ENCODE measurements at regions of chr13 and their contacts with region 1.

Region 1: DNA sequence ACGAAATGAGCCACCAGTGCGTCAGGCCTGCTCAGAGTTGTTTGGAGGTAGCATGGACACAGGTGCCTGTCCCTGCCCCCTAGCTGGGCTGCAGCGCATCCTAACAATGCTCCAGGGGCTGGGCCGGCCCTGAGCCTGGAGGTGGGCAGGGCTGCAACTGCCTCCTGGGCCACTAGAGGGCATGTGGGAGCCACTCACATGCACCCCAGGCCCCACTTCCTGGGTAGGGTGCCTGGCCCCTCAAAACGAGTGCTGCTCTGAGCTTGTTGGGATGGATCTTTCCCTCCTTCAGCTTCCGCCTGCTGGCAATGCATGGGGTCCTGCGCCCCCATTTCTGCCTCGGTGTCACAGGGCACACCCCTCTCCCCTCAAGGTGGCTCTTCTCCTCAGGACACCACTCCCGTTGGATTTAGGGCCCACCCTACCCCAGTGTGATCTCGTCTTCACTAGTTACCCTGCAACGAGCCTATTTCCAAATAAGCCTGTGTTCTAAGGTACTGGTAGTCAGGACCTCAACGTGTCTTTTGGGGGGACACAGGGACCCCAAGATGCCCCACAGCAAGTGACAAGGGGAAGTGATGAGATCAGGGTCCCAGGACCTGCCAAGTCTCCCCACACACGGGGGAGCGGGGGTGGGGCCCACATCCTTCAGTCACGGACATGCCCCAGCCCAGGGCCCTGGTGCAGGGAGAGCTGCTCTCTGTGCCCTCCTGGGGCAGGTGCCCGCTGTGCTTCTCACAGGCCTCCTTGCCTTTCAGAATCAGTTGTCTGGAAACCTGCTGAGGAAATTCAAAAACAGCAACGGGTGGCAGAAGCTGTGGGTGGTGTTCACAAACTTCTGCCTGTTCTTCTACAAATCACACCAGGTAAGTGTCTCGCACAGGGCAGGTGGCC is 131.3 kb downstream of the STK24 start:
- DNase-seq: peak; percentile 64 to 90 (median 87)
- ATAC-seq: peak; percentile 81 to 85
- H3K4me3 ChIP-seq: no peak overlapping the region
- H3K27ac ChIP-seq: no peak overlapping the region
- H3K4me1 ChIP-seq: peaks cover 3% of the 10 kb centered on the region
- H3K27me3 ChIP-seq: no peaks in the 10 kb centered on the region

Region 2: DNA sequence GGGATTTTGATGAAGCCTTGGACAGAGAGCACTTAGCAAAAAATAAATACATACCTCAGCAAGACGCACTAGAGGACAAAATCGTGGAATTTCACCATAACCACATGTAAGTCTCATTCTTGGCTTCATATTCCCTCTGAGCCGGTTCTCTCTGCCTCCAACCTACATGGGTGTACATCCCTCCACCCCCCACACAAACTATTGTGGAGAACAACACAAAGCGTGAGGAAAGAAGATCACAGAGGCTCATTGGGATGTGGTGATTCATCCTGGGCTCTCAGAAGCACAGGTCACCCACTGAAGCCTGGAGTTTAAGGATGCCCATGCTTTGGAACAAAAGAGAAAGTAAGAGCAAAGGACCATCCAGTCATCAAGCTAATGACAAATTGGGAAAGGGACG is 60.8 kb before region 1 on chr13:
- intact Hi-C with region 1: loop called in 1 of 4 experiments (anchors 10 kb)
- DNase-seq: no peak
- ATAC-seq: no peak
- H3K4me3 ChIP-seq: no peak overlapping the region
- H3K27ac ChIP-seq: no peak overlapping the region
- H3K4me1 ChIP-seq: peaks cover 4% of the 10 kb centered on the region
- H3K27me3 ChIP-seq: no peaks in the 10 kb centered on the region

Region 3: DNA sequence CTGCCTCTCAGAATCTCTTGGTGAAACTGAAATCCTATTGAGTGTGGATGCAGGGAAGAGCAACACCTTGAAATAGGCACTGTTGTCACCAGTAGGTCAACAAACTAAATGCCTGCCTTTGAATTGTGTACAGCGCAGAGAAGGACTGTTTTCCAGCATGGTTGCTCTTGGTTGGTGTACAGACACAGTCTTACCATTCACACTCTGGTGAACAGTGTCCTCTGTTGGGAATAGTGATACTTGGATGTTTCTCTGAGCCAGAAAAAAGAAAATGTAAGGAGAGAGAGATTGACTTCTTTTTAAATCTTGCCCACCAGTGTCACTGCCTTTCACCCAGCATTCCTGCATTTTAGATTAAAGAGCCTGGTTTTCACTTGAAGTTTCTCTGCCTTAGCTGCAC is 48.4 kb before region 1 on chr13:
- intact Hi-C with region 1: no loop called
- DNase-seq: no peak
- ATAC-seq: peak in 1 of 2 donors; percentile 60
- H3K4me3 ChIP-seq: no peak overlapping the region
- H3K27ac ChIP-seq: no peak overlapping the region
- H3K4me1 ChIP-seq: no peaks in the 10 kb centered on the region
- H3K27me3 ChIP-seq: no peaks in the 10 kb centered on the region

Region 4: GRCh38 chr13:98653463-98653985 is 207.9 kb after region 1 on chr13:
- intact Hi-C with region 1: loop called (anchors 5 kb)
- DNase-seq: peak; percentile 77 to 91 (median 85)
- ATAC-seq: peak; percentile 86 to 87
- H3K4me3 ChIP-seq: no peak overlapping the region
- H3K27ac ChIP-seq: no peak overlapping the region
- H3K4me1 ChIP-seq: no peaks in the 10 kb centered on the region
- H3K27me3 ChIP-seq: no peaks in the 10 kb centered on the region

Region 5: DNA sequence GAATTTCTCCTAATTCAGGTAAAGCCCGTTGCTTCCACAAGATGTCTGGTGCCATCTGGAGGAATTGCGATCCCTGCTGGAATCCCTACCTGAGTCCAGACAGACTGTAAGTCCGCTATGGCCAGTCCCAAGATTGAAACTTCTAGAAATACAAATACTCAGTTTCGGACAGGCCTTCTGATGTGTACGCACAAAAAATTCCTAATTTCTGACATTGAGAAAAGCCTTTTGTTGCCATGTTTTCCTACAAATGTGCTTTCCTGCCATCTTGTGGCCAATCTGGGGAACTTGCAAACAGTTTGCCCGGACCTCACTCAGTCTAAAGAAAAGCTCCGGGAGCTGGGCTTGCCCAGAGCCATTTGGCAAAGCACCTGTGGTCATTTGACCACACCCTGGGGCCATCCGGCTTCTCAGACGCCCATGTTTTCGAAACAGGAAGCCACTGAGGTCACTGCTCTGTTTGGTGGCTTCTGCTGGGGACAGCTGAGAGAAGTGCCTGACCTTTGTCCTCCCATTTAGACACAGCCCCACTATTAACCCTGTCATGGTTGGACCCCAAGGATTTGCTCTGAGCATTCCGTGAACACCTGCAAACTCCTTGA is 227.5 kb after region 1 on chr13:
- intact Hi-C with region 1: loop called (anchors 5 kb)
- DNase-seq: peak; percentile 75 to 85 (median 83)
- ATAC-seq: peak; percentile 90 to 95
- H3K4me3 ChIP-seq: no peak overlapping the region
- H3K27ac ChIP-seq: no peak overlapping the region
- H3K4me1 ChIP-seq: peaks cover 2% of the 10 kb centered on the region
- H3K27me3 ChIP-seq: no peaks in the 10 kb centered on the region

Region 6: DNA sequence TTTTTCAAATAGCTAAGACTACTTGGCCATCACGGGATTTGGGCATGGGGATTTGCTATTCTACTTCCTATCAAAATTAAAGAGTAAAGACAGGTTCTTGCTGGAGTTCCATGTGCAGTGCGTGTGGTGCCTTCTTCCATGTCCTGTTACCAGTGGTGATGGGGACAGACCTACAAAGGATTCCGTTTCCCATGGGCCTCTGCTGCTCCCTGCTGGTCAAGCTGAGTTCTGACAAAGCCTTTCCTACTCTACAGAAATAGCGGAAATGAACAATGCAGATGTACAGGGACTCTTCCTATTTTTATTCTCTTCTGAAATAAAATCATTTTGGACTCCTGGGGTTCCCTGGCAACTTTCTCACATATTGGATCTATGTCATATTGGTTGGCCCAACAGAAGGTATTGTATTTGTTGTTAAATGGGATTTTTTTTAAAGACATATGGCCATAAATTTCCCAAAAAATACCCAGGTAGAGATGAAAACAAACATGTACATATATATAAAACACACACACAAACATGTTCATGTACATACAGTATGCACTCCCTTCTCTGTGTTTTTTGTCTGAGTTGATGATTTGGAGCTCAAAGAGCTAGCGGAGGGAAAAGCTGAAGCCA is 397.4 kb after region 1 on chr13:
- intact Hi-C with region 1: loop called in 2 of 4 experiments (anchors 5 to 10 kb)
- DNase-seq: peak; percentile 65 to 86 (median 83)
- ATAC-seq: peak; percentile 84 to 85
- H3K4me3 ChIP-seq: no peak overlapping the region
- H3K27ac ChIP-seq: no peak overlapping the region
- H3K4me1 ChIP-seq: no peaks in the 10 kb centered on the region
- H3K27me3 ChIP-seq: no peaks in the 10 kb centered on the region

Measured in right cardiac atrium (tissue), 5 donors.